Activated CD4-positive, alpha-beta T cell treated with anti-CD3 and anti-CD28 coated beads for 36 hours (primary cell): ENCODE measurements at regions of chr4 and their contacts with region 1.

Region 1: GRCh38 chr4:26607776-26608175 is 23.9 kb downstream of the TBC1D19 start:
- DNase-seq: no peak
- ATAC-seq: no peak
- H3K4me3 Mint-ChIP-seq: no peak overlapping the region
- H3K27ac Mint-ChIP-seq: no peak overlapping the region
- H3K4me1 Mint-ChIP-seq: peaks cover 12% of the 10 kb centered on the region
- H3K27me3 Mint-ChIP-seq: no peaks in the 10 kb centered on the region

Region 2: GRCh38 chr4:26356081-26356501 is 251.7 kb before region 1 on chr4:
- CTCF ChIA-PET with region 1: no interaction called
- POLR2A ChIA-PET with region 1: no interaction called
- intact Hi-C with region 1: no loop called
- DNase-seq: peak; percentile 18
- ATAC-seq: peak; percentile 59
- H3K4me3 Mint-ChIP-seq: no peak overlapping the region
- H3K27ac Mint-ChIP-seq: no peak overlapping the region
- H3K4me1 Mint-ChIP-seq: peaks cover 30% of the 10 kb centered on the region
- H3K27me3 Mint-ChIP-seq: no peaks in the 10 kb centered on the region

Region 3: DNA sequence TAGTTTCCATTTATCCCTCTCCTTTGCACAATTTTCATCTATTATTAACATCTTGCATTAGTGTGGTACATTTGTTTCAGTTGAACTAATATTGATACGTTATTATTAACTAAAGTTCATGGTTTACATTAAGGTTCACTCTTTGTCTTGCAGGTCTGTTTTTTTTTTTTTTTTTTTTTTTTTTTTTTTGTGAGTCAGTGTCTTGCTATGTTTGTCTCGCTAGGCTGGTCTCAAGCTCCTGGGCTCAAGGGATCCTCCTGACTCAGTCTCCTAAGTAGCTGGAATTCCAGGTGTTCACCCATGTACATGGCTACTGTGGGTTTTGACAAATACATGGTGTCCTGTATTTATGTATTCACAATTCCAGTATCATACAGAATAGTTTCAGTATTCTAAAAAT is 17.1 kb before region 1 on chr4:
- CTCF ChIA-PET with region 1: no interaction called
- POLR2A ChIA-PET with region 1: no interaction called
- intact Hi-C with region 1: loop called in 1 of 2 experiments (anchors 1 kb)
- DNase-seq: no peak
- ATAC-seq: no peak
- H3K4me3 Mint-ChIP-seq: no peak overlapping the region
- H3K27ac Mint-ChIP-seq: no peak overlapping the region
- H3K4me1 Mint-ChIP-seq: peaks cover 10% of the 10 kb centered on the region
- H3K27me3 Mint-ChIP-seq: no peaks in the 10 kb centered on the region

Region 4: DNA sequence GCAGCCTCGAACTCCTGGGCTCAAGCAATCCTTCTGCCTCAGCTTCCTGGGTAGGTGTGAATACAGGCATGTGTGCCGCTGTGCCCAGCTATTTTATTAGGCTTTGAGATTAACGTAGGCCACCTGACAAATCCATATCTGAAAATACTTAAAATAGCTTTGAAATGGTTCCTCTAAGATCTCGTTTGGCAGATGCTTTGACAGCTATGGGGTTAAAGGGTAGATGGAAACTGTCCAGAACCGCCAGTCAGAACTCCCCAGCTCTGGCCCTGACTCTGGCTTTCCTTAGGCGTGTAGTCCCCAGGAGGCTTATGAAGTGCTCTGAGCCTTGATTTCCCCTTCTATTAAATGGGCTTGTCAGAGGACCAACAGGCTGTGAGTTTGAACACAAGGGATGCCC is 220.0 kb after region 1 on chr4:
- CTCF ChIA-PET with region 1: no interaction called
- POLR2A ChIA-PET with region 1: no interaction called
- intact Hi-C with region 1: no loop called
- DNase-seq: no peak
- ATAC-seq: no peak
- H3K4me3 Mint-ChIP-seq: no peak overlapping the region
- H3K27ac Mint-ChIP-seq: no peak overlapping the region
- H3K4me1 Mint-ChIP-seq: peaks cover 2% of the 10 kb centered on the region
- H3K27me3 Mint-ChIP-seq: no peaks in the 10 kb centered on the region

Region 5: DNA sequence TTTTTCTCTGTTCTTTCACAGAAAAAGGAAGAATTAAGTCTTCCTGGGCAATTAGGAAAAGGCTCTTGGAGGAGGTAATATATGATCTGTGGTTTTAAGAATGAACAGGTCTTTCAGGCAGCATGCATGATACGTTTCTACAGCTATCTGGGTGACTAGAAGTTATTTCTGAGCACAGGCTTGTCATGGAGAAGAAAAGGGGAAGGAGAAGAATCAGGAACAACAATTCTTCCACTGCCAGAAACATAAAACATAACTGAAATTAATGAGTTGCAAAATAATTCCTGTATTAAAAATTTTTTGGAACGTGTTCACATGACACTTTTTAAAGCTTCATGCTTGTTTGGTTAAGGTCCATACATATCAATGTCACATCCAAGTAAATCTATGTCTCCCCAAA is 235.1 kb after region 1 on chr4:
- CTCF ChIA-PET with region 1: no interaction called
- POLR2A ChIA-PET with region 1: no interaction called
- intact Hi-C with region 1: no loop called
- DNase-seq: no peak
- ATAC-seq: no peak
- H3K4me3 Mint-ChIP-seq: no peak overlapping the region
- H3K27ac Mint-ChIP-seq: no peak overlapping the region
- H3K4me1 Mint-ChIP-seq: peaks cover 5% of the 10 kb centered on the region
- H3K27me3 Mint-ChIP-seq: no peaks in the 10 kb centered on the region